ENCODE measurements at regions of chr13 and their contacts with region 1.

Region 1: DNA sequence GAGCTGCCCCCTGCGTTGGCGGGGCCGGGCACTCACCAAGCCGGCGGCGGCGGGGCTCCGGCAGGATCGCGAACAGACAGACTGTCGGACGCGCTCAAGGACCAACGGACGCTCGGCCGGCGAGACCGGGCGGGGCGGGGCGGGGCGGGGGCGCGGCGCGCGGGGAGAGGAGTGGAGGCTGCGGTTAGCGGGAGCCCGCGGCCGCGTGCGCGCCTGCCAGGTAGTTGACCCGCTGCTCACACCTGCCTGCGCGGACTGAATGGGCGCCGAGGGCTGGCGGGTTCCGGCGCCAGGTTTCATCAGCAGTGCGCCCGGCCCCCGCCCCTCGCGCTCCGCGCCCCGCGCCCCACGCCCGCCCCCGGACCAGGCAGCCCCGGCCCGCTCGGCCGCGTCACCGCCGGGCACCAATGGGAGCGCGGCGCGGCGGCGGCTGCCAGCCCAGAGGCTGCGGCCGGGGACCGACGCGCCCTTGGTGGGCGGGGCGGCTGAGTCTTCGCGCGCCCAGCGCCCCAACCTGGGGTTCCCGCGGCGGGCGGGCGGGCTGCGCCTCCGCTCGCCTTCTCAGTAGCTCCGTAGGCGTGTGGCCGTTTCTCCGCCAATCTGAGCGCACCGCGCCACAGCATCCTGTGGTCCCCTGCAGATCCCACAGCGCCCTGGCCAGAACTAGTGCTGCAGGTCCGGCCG is at the start of gene SLC7A1:
- DNase-seq: peak; percentile 97
- H3K4me3 Mint-ChIP-seq: peak within 1 kb of the TSS; percentile 95
- H3K27ac Mint-ChIP-seq: peak within 1 kb of the TSS; percentile 97
- H3K4me1 Mint-ChIP-seq: peaks cover 38% of the 10 kb centered on the region
- H3K27me3 Mint-ChIP-seq: peaks cover 5% of the 10 kb centered on the region
- total RNA-seq, gene SLC7A1: 137 and 138 TPM in 2 replicates

Region 2: DNA sequence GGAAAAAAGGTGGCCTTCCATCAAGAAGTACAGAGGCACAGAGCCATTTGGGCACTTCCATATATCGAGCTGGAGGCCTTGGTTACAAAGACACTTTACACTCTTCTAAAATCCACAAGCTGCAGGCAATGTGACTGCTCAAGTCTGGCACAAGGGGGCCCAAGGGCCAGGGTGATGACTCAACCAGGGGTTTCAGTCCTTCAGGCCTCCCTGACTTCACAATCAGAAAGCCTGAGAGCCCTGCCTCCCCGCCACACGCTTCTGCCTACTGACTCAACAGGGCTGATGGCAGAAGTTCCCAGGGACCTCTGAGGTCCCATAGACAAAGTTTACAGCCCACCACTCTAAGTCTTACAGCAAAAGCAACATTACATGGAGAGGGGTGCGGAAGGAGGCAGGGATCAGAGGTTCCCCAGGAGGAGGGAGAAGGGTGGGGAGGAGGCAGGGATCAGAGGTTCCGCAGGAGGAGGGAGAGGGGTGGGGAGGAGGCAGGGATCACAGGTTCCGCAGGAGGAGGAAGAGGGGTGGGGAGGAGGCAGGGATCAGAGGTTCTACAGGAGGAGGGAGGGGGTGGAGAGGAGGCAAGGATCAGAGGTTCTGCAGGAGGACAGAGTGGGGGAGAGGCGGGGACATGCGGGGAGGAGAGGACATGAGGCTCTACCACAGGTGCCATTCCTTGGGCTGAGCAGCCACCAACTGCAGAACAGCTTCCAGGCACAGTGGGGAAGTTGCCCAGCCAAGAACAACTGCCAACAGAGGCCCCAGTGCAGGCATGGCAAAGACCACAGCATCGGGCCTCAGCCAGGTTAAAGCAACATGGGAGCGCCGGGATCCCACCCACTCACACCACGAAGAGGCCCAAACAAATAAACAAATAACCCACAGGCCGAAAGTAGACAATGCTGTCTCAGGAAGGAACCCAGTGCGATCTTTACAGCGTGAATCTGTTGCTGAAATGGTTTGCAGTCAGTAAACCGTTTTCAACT is 52.0 kb before region 1 on chr13:
- intact Hi-C with region 1: loop called (anchors 5 kb)
- DNase-seq: peak; percentile 61
- H3K4me3 Mint-ChIP-seq: no peak overlapping the region
- H3K27ac Mint-ChIP-seq: peak overlapping the region; percentile 87
- H3K4me1 Mint-ChIP-seq: peaks cover 36% of the 10 kb centered on the region
- H3K27me3 Mint-ChIP-seq: no peaks in the 10 kb centered on the region

Region 3: DNA sequence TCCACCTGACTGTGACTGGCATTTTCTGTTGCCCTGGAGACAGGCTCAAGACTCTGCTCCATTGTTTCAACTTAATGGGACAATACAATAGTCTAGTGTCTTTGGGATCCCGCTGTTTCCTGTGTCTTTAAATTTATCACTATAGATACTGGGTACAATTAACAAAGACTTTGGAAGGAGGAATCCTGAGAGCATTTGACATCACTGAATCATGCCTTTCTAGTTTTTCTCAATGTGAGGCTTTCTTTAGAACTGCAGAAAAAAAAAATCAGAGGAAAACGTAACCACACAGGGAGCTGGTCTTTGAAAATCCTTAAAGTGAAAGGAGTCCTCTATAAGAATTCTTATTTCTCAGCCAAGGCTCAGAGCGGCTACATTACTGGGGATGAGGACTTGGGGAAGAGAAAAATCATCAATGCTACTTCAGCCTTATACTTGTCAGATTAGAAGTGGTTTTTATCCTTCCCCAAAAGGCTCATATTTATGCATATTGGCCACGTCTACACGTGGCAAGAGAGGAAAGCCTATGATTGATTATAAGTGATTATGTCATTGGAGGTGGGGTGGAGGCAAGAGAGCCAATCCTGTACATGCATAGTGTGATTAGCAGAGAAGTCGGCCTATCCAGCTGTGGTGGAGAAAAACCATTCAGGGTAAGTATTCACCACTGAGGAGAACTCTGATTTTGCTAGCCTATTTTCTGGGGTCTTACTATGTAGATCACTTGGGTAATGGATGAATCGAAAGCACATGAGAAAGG is 289.3 kb after region 1 on chr13:
- intact Hi-C with region 1: no loop called
- DNase-seq: no peak
- H3K4me3 Mint-ChIP-seq: no peak overlapping the region
- H3K27ac Mint-ChIP-seq: no peak overlapping the region
- H3K4me1 Mint-ChIP-seq: peaks cover 28% of the 10 kb centered on the region
- H3K27me3 Mint-ChIP-seq: peaks cover 2% of the 10 kb centered on the region

Measured in activated CD4-positive, alpha-beta T cell treated with anti-CD3 and anti-CD28 coated beads, Interleukin-2, amount 10 ng/mL, durations not matched to agents 24 days and 14 days (primary cell).